Posterior vena cava (tissue), 2 donors: ENCODE measurements at regions of chr1 and their contacts with region 1.

Region 1: GRCh38 chr1:151352006-151352689 is 5.1 kb upstream of the RFX5 start:
- DNase-seq: no peak

Region 2: GRCh38 chr1:151881456-151881855 is 529.3 kb after region 1 on chr1:
- intact Hi-C with region 1: no loop called
- DNase-seq: no peak

Region 3: DNA sequence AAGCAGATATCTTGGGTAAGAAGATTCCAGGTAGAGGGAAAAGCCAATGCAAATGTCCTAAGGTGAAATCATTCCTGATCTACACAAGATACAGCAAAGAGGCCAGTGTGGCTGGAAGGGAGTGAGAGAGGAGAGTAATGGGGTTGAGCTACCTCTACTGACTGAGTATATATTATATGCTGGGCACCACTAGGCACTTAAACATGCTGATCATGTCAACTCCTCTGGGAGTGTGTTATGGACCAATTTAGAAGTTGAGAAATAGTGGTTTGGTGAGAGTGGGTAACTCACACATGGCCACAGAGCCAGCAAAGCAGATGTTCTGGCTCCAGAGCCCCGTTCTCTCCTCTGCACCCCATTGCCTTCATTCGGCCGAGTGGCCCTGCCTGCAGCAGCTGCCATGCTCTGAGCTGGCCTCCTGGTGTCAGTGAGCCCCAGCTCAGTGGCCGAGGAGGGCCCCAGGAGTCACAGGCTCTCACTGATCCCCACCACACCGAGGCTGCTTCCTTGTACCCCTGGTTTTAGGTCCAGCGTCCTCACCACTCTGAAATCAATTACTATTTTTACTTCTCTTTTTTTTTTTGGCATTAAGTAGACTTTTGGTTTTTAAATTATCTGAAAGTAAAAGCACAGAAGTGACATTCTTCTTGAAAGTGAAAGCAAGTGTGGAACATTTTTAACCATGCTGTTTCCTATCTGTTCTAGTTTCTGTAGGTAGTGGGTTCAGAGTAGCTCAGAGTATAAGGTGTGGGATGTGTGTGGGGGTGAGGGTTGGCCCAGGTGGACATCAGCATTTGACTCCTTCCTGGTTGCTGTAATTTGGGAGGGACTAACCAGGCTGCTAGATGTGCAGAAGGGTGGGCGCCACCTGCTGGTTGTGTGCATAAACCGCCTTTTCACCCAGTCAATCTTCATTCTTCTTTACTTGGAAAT is 1107.7 kb after region 1 on chr1:
- intact Hi-C with region 1: loop called in 1 of 2 experiments (anchors 10 kb)
- DNase-seq: peak; percentile 92